Activated B cell treated with CpG ODN at 0.5 μM for 24 hours (primary cell): ENCODE measurements at regions of chr19 and their contacts with region 1.

Region 1: GRCh38 chr19:36489118-36489919 is at the start of gene ZNF566:
- DNase-seq: peak; percentile 81
- ATAC-seq: peak; percentile 92
- H3K4me3 Mint-ChIP-seq: peak within 1 kb of the TSS; percentile 98
- H3K27ac Mint-ChIP-seq: peak within 1 kb of the TSS; percentile 99
- H3K4me1 Mint-ChIP-seq: peaks cover 46% of the 10 kb centered on the region
- H3K27me3 Mint-ChIP-seq: no peaks in the 10 kb centered on the region
- CTCF ChIP-seq: no peak
- total RNA-seq, gene ZNF566: 14.1 and 16.6 TPM in 2 replicates

Region 2: GRCh38 chr19:36132489-36132891 is 356.8 kb before region 1 on chr19:
- CTCF ChIA-PET with region 1: interaction called, 4 read pairs
- POLR2A ChIA-PET with region 1: interaction called, 5 read pairs
- intact Hi-C with region 1: loop called (anchors 5 kb)
- DNase-seq: no peak
- ATAC-seq: no peak
- H3K4me3 Mint-ChIP-seq: no peak overlapping the region
- H3K27ac Mint-ChIP-seq: no peak overlapping the region
- H3K4me1 Mint-ChIP-seq: peaks cover 18% of the 10 kb centered on the region
- H3K27me3 Mint-ChIP-seq: peaks cover 2% of the 10 kb centered on the region
- CTCF ChIP-seq: no peak

Region 3: DNA sequence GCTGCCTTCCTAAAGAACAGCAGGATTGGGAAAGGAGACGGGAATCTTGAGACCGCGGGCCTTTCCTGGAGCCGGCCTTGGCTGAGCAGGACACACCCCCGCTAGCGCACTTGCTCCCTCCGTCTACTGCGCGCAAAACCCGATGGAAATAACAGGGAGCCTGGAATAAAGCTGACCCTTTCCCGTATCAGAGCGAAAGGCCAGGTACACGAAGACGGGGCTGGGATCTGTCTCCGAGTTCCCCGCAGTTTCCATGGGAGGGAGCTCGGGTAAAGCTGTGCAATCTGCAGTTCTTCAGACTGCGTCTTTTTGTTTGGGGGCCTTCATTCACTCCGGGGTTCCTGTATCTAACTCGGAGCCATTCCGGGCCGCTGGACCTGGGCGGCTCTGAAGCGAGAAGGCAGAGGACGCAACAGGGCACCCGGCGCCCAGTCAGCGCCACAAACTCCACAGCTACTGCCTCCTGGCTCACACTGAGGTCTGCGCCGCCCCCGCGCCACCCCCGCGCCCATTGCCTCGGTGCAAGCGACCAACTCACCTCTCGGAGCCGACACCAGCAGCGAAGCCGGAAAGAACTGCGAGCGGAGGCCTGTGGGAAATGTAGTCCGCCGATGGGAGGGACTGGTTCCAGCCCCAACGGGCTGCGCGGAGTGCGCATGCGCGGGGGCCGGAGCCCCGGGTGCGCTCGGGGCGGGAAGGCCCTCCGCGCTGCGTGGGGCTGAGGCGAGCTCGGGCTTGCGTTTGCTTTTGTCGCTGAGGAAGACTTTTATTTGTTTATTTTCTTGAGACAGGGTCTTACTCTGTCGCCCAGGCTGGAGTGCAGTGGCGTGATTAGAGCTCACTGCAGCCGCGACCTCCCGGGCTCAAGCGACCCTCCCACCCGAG is 110.5 kb before region 1 on chr19 and contains the start of gene ZFP14:
- CTCF ChIA-PET with region 1: interaction called, 5 read pairs
- POLR2A ChIA-PET with region 1: interaction called, 26 read pairs
- intact Hi-C with region 1: loop called (anchors 1 kb)
- DNase-seq: peak; percentile 92
- ATAC-seq: peak; percentile 99
- H3K4me3 Mint-ChIP-seq: peak within 1 kb of the TSS; percentile 94
- H3K27ac Mint-ChIP-seq: peak within 1 kb of the TSS; percentile 96
- H3K4me1 Mint-ChIP-seq: peaks cover 21% of the 10 kb centered on the region
- H3K27me3 Mint-ChIP-seq: no peaks in the 10 kb centered on the region
- CTCF ChIP-seq: no peak
- total RNA-seq, gene ZFP14: 7.7 and 10.4 TPM in 2 replicates

Region 4: GRCh38 chr19:36528194-36528920 is 39.0 kb after region 1 on chr19 and contains the start of gene ZNF260:
- CTCF ChIA-PET with region 1: no interaction called
- POLR2A ChIA-PET with region 1: interaction called, 39 read pairs
- intact Hi-C with region 1: loop called (anchors 1 kb)
- DNase-seq: peak; percentile 94
- ATAC-seq: peak; percentile 89
- H3K4me3 Mint-ChIP-seq: peak within 1 kb of the TSS; percentile 99
- H3K27ac Mint-ChIP-seq: peak within 1 kb of the TSS; percentile 99
- H3K4me1 Mint-ChIP-seq: peaks cover 27% of the 10 kb centered on the region
- H3K27me3 Mint-ChIP-seq: no peaks in the 10 kb centered on the region
- CTCF ChIP-seq: no peak
- total RNA-seq, gene ZNF260: 9.8 and 13.6 TPM in 2 replicates

Region 5: DNA sequence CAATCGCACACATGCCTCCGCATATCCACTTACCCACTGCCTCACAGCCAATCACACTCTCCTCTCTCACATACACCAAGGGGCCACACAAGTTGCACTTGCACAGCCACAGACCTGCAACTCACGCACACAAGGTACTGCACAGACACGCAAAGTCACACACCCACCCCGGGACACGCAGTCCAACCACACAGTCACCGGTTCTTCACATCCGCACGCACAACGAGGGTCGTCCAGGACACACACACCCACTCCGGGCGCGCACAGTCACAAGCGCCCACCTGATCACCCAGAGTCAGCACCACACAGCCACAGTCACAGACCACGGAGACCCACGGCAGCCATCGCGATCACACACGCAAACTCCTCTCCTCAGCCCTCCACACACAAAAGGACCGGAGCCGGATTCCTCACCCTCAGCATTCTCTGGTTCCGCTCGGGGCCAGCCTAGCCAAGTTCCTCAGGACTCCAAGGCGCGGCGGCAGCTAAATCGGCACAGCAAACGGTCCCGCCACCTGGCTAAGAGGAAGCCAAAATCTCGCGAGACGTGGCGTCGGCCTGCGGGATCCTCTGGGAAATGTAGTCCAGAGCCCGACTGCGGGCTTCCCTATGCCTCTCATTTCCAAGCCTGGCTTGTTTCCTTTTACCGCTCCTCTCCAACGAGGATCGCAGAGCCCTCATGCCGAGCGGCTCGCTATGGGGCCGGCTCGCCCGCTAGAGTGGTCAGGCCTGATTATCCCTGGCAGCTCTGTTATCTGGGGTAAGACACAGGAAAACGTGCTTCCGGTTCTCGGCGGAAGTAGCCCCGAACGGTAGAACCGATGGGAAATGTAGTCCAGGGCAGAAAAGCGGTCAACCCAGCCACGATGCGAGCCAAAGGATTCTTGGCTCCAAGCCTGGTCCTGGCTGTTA is 283.2 kb after region 1 on chr19 and contains the start of gene ZNF850:
- CTCF ChIA-PET with region 1: no interaction called
- POLR2A ChIA-PET with region 1: interaction called, 5 read pairs
- intact Hi-C with region 1: loop called (anchors 10 kb)
- DNase-seq: peak; percentile 89
- ATAC-seq: peak; percentile 92
- H3K4me3 Mint-ChIP-seq: peak within 1 kb of the TSS; percentile 92
- H3K27ac Mint-ChIP-seq: peak within 1 kb of the TSS; percentile 85
- H3K4me1 Mint-ChIP-seq: peaks cover 24% of the 10 kb centered on the region
- H3K27me3 Mint-ChIP-seq: no peaks in the 10 kb centered on the region
- CTCF ChIP-seq: no peak
- total RNA-seq, gene ZNF850: 5.8 and 7.9 TPM in 2 replicates

Region 6: GRCh38 chr19:36915992-36916830 is 426.9 kb after region 1 on chr19 and contains the starts of genes ZNF568 and ZNF829:
- CTCF ChIA-PET with region 1: no interaction called
- POLR2A ChIA-PET with region 1: interaction called, 3 read pairs
- intact Hi-C with region 1: loop called (anchors 1 kb)
- DNase-seq: peak; percentile 87
- ATAC-seq: peak; percentile 93
- H3K4me3 Mint-ChIP-seq: peak within 1 kb of the TSS; percentile 91
- H3K27ac Mint-ChIP-seq: peak within 1 kb of the TSS; percentile 91
- H3K4me1 Mint-ChIP-seq: peaks cover 26% of the 10 kb centered on the region
- H3K27me3 Mint-ChIP-seq: no peaks in the 10 kb centered on the region
- CTCF ChIP-seq: no peak
- total RNA-seq, gene ZNF568: 12.0 and 13.4 TPM in 2 replicates
- total RNA-seq, gene ZNF829: 7.3 and 7.6 TPM in 2 replicates